Common myeloid progenitor, CD34-positive (primary cell): ENCODE measurements at regions of chr2 and their contacts with region 1.

Region 1: GRCh38 chr2:33033606-33034081 is 86.9 kb downstream of the LTBP1 start:
- DNase-seq: peak; percentile 56 to 77 (median 74)
- H3K4me3 ChIP-seq: no peak overlapping the region
- H3K27ac ChIP-seq: no peak overlapping the region
- H3K4me1 ChIP-seq: no peaks in the 10 kb centered on the region
- H3K27me3 ChIP-seq: no peaks in the 10 kb centered on the region

Region 2: GRCh38 chr2:32534831-32535230 is 498.8 kb before region 1 on chr2:
- CTCF ChIA-PET with region 1: no interaction called
- POLR2A ChIA-PET with region 1: no interaction called
- DNase-seq: peak in 2 of 3 donors; percentile 70 to 80
- H3K4me3 ChIP-seq: no peak overlapping the region
- H3K27ac ChIP-seq: no peak overlapping the region
- H3K4me1 ChIP-seq: peaks cover 0 to 6% (median 0%) of the 10 kb centered on the region in 4 experiments
- H3K27me3 ChIP-seq: no peaks in the 10 kb centered on the region

Region 3: GRCh38 chr2:32772638-32773447 is 260.8 kb before region 1 on chr2:
- CTCF ChIA-PET with region 1: interaction called, 72 read pairs
- POLR2A ChIA-PET with region 1: no interaction called
- DNase-seq: peak; percentile 27 to 36 (median 27)
- H3K4me3 ChIP-seq: no peak overlapping the region
- H3K27ac ChIP-seq: no peak overlapping the region
- H3K4me1 ChIP-seq: peaks cover 0 to 12% (median 3%) of the 10 kb centered on the region in 4 experiments
- H3K27me3 ChIP-seq: no peaks in the 10 kb centered on the region

Region 4: DNA sequence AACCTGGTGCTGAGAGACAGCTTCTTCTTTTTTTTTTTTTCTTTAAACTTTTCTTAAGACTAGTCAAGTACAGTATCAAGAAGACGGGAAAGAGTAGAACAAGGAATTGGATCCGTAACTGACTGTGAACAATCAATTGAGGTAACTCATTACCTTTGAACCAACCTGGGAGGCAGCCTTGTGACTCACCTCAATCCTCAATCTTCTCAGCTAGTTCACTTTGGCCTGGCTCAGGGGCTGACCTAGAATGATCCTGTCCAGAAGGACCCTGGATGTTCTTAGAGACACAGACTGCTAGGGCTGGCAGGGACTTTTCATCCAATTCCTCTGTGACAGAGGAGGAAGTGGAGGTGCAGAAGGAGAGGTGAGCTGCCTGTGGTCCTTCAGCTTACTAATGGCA is 88.4 kb before region 1 on chr2:
- CTCF ChIA-PET with region 1: interaction called, 15 read pairs
- POLR2A ChIA-PET with region 1: no interaction called
- DNase-seq: no peak
- H3K4me3 ChIP-seq: no peak overlapping the region
- H3K27ac ChIP-seq: no peak overlapping the region
- H3K4me1 ChIP-seq: peaks cover 0 to 19% (median 9%) of the 10 kb centered on the region in 4 experiments
- H3K27me3 ChIP-seq: peaks cover 0 to 32% (median 15%) of the 10 kb centered on the region in 5 experiments

Region 5: GRCh38 chr2:33372940-33373553 is 339.4 kb after region 1 on chr2:
- CTCF ChIA-PET with region 1: interaction called, 18 read pairs
- POLR2A ChIA-PET with region 1: no interaction called
- DNase-seq: peak; percentile 59 to 62 (median 61)
- H3K4me3 ChIP-seq: no peak overlapping the region
- H3K27ac ChIP-seq: no peak overlapping the region
- H3K4me1 ChIP-seq: no peaks in the 10 kb centered on the region
- H3K27me3 ChIP-seq: no peaks in the 10 kb centered on the region

Region 6: GRCh38 chr2:33510586-33510968 is 476.9 kb after region 1 on chr2:
- CTCF ChIA-PET with region 1: no interaction called
- POLR2A ChIA-PET with region 1: no interaction called
- DNase-seq: no peak
- H3K4me3 ChIP-seq: no peak overlapping the region
- H3K27ac ChIP-seq: no peak overlapping the region
- H3K4me1 ChIP-seq: no peaks in the 10 kb centered on the region
- H3K27me3 ChIP-seq: no peaks in the 10 kb centered on the region

Region 7: DNA sequence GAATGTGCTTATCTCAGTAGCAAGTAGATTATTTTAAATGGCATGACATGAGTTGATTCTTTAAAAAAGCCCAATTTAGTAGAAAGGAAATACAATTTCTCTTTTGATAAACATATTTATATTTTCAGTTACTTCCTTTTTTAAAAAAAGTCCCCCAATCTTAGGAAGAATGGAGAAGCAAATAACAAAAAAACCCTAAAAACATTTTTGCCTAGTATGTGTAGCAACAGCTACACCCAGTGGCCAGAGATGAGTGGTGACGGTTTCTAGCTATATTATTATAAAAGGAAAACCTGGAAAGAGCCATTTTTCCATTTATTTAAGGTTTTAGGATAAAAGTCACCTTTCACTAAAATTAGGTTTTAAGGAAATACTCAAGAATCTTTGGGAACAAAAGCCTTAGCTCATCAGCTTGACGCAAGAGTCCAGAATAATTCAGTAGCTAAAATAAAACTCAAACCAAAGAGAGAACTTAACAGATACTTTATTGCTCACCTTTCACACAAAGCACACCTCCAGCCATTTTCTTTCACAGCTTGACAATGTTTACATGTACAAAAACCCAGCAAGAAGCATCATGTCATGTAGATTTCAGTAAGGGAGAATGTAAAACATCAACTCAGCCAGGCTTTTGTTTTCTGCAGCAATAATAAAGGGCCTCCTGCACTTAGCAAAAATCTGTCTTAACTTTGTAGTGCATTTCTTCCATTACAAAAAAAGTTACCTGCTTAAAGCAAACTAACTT is 549.7 kb after region 1 on chr2:
- CTCF ChIA-PET with region 1: interaction called, 14 read pairs
- POLR2A ChIA-PET with region 1: interaction called, 4 read pairs
- DNase-seq: peak; percentile 48 to 80 (median 72)
- H3K4me3 ChIP-seq: no peak overlapping the region
- H3K27ac ChIP-seq: peak overlapping the region in 1 of 2 experiments; percentile 51
- H3K4me1 ChIP-seq: peaks cover 7 to 23% (median 14%) of the 10 kb centered on the region in 4 experiments
- H3K27me3 ChIP-seq: no peaks in the 10 kb centered on the region